ENCODE measurements at regions of chr10 and their contacts with region 1.

Region 1: GRCh38 chr10:82883588-82883987 is 1008.6 kb downstream of the NRG3 start:
- DNase-seq: no peak
- ATAC-seq: no peak
- H3K4me3 ChIP-seq: no peak overlapping the region
- H3K27ac ChIP-seq: no peak overlapping the region
- H3K4me1 ChIP-seq: no peaks in the 10 kb centered on the region
- H3K27me3 ChIP-seq: no peaks in the 10 kb centered on the region
- CTCF ChIP-seq: no peak
- EP300 ChIP-seq: no peak
- POLR2A ChIP-seq: no peak
- RAD21 ChIP-seq: no peak

Region 2: DNA sequence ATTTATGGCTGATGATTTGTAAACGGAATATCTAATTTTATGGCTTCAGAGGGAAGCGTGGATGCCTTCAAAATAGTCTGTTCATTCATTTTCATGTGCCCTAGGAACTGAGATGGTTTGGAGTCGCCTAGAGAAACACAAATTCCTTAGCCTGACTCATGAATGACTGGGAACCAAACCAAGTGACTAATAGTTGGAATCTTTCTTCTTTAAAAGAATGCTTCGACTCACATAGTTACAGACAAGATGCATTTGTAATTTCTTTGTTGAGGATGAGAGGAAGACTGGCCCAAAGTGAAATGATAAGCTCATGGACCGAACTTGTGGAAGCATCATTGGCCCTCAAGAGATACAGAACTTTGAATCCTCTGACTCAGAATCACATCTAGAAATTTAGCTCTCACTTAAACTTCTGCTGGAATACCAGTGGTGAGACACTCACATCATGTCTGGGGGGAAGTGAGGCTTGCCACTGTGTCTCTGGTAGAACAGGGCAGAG is 98.6 kb after region 1 on chr10:
- CTCF ChIA-PET with region 1: no interaction called
- POLR2A ChIA-PET with region 1: interaction called, 10 read pairs
- RAD21 ChIA-PET with region 1: no interaction called
- SMC1A ChIA-PET with region 1: no interaction called
- in situ Hi-C with region 1: no loop called
- intact Hi-C with region 1: no loop called
- DNase-seq: no peak
- ATAC-seq: no peak
- H3K4me3 ChIP-seq: no peak overlapping the region
- H3K27ac ChIP-seq: no peak overlapping the region
- H3K4me1 ChIP-seq: no peaks in the 10 kb centered on the region
- H3K27me3 ChIP-seq: no peaks in the 10 kb centered on the region
- CTCF ChIP-seq: no peak
- EP300 ChIP-seq: no peak
- POLR2A ChIP-seq: no peak
- RAD21 ChIP-seq: no peak

Measured in GM12878 (cell line).